Heart left ventricle (tissue), 16 donors: ENCODE measurements at regions of chrX and their contacts with region 1.

Region 1: DNA sequence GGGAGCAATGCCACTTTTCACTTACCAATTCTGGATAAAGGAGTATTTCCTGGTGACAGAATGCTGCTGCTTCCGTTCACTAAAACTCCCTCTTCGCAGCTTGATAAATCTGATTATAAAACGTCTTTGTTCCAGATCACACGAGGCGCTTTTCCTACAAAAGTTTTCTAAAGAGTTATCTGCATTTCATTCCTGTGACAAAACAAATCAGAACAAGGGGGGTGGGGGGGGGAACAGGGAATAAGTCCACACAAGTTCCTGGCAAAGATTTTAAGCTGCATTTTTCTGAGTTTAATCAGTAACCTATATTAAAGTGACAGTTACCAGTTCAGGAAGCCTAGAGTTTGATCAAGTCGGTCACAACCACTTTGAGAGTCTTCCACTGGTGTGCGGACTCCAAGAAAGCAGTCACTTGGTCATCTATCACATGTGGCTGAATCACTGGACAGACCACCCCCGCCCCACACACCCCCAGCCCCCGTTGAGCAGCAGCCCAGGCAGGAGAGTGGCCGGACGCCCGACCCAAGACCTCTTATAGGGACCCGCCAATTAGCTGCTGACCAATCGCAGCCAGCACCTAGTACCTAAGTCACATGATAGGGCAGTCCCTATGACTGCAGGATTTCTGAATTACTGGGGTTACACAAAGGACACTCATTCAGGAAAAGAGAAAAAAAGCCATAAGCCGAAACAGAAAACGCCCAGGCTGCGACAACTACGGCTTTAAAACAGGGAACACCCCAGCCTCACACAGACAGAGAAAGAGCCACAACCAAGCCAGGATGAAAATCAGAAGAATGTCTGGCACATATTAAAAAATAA is 569.3 kb upstream of the DIPK2B start:
- DNase-seq: peak; percentile 55 to 73 (median 65)
- ATAC-seq: peak; percentile 82 to 94 (median 92)
- H3K4me3 ChIP-seq: peak overlapping the region in 11 of 12 donors; percentile 12 to 67 (median 52)
- H3K27ac ChIP-seq: peak overlapping the region; percentile 8 to 84 (median 76)
- H3K4me1 ChIP-seq: peaks cover 0 to 39% (median 2%) of the 10 kb centered on the region in 12 donors
- H3K27me3 ChIP-seq: peaks cover 0 to 41% (median 0%) of the 10 kb centered on the region in 9 donors
- CTCF ChIP-seq: no peak
- POLR2A ChIP-seq: peak in 1 of 2 donors; percentile 54

Region 2: DNA sequence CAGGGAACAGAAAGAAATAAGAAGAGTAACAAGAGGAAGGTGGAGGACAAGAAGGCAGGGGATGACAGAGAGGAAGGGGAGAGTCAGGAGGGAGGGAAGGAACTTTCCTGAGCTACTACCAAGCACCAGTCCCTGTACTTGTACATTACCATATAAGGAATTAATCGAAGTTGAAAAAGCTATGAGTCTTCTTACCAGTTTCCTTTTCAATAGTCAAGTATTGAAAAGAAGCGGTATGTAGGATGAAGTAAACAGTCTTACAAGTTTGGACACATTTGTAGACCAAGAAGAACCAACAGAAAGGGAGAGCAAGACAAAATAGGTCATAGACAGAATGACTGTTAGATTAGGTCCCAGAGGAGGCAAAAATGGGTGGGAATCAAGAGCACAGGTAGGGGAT is 60.4 kb after region 1 on chrX:
- intact Hi-C with region 1: loop called in 1 of 10 experiments (anchors 10 kb)
- DNase-seq: no peak
- ATAC-seq: no peak
- H3K4me3 ChIP-seq: no peak overlapping the region
- H3K27ac ChIP-seq: no peak overlapping the region
- H3K4me1 ChIP-seq: no peaks in the 10 kb centered on the region
- H3K27me3 ChIP-seq: peaks cover 0 to 23% (median 0%) of the 10 kb centered on the region in 9 donors
- CTCF ChIP-seq: no peak
- POLR2A ChIP-seq: no peak